Activated CD8-positive, alpha-beta memory T cell treated with anti-CD3 and anti-CD28 coated beads, Interleukin-2, amount 10 ng/mL, durations not matched to agents 7 days and 5 days (primary cell): ENCODE measurements at regions of chr17 and their contacts with region 1.

Region 1: GRCh38 chr17:64025732-64026294 is 5.4 kb upstream of the ICAM2 start:
- DNase-seq: peak; percentile 97
- ATAC-seq: peak; percentile 87
- H3K4me3 Mint-ChIP-seq: peak overlapping the region; percentile 65
- H3K27ac Mint-ChIP-seq: peak overlapping the region; percentile 92
- H3K4me1 Mint-ChIP-seq: peaks cover 60% of the 10 kb centered on the region
- H3K27me3 Mint-ChIP-seq: no peaks in the 10 kb centered on the region

Region 2: GRCh38 chr17:63904316-63904715 is 121.5 kb before region 1 on chr17:
- CTCF ChIA-PET with region 1: interaction called, 11 read pairs
- DNase-seq: no peak
- ATAC-seq: no peak
- H3K4me3 Mint-ChIP-seq: no peak overlapping the region
- H3K27ac Mint-ChIP-seq: no peak overlapping the region
- H3K4me1 Mint-ChIP-seq: peaks cover 5% of the 10 kb centered on the region
- H3K27me3 Mint-ChIP-seq: peaks cover 43% of the 10 kb centered on the region

Region 3: GRCh38 chr17:63931099-63931561 is 94.7 kb before region 1 on chr17:
- CTCF ChIA-PET with region 1: interaction called, 14 read pairs
- DNase-seq: peak; percentile 82
- ATAC-seq: peak; percentile 88
- H3K4me3 Mint-ChIP-seq: peak overlapping the region; percentile 81
- H3K27ac Mint-ChIP-seq: peak overlapping the region; percentile 86
- H3K4me1 Mint-ChIP-seq: peaks cover 20% of the 10 kb centered on the region
- H3K27me3 Mint-ChIP-seq: peaks cover 7% of the 10 kb centered on the region

Region 4: DNA sequence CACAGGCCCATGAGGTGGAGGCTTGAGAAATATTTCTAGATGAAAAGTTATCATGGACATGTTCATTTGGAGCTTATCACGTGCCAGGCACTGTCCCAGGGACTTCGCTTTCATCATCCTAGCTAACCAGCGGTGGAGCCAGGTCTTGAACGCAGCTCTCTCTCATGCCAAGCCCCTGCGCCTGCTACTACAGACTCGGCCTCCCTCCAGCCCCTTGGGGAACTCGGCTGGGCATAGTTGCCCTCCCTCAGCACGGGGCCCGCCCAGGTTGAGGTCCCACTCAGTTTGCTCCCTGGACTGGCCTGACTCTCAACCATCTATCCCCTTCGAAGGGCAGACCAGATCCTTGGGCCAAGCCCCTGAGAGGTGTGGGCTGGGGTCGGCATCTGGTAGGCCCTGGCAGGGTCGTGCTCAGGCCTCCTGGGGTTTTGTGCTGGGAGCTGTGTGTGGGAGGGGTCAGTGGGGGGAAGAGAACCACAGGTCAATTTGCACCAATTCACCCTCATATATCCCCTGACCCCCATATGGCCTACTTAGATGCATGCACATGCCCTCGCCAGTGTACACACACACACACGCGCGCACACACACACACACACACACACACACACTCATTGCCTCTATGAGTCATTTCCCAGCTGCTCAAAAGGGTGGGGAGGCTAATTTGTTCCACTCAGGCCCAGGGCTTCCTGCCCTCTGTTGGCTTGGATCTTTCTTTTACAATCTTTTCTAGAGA is 41.0 kb before region 1 on chr17:
- CTCF ChIA-PET with region 1: interaction called, 126 read pairs
- DNase-seq: peak; percentile 67
- ATAC-seq: peak; percentile 83
- H3K4me3 Mint-ChIP-seq: no peak overlapping the region
- H3K27ac Mint-ChIP-seq: peak overlapping the region; percentile 72
- H3K4me1 Mint-ChIP-seq: peaks cover 15% of the 10 kb centered on the region
- H3K27me3 Mint-ChIP-seq: no peaks in the 10 kb centered on the region

Region 5: DNA sequence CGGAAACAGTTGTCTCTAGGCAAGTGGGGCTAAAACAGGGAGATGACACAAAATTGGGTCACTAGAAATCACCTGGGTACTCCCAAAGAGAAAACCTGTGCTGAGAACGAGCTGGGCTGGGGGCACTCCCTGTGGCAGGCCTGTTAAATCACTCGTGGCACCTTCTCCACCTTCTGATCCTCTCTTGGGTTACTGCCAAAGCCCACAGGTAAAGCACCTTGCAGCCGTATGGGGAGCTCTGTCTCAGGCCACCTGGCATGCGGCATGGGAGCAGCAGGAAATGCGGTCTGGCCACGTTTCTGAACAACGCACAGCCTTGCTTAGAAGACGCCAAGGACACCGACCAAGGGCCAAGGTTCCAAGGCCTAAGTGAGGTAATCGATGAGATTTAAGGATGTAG is 16.1 kb after region 1 on chr17:
- CTCF ChIA-PET with region 1: interaction called, 87 read pairs
- DNase-seq: no peak
- ATAC-seq: no peak
- H3K4me3 Mint-ChIP-seq: no peak overlapping the region
- H3K27ac Mint-ChIP-seq: no peak overlapping the region
- H3K4me1 Mint-ChIP-seq: peaks cover 5% of the 10 kb centered on the region
- H3K27me3 Mint-ChIP-seq: no peaks in the 10 kb centered on the region

Region 6: DNA sequence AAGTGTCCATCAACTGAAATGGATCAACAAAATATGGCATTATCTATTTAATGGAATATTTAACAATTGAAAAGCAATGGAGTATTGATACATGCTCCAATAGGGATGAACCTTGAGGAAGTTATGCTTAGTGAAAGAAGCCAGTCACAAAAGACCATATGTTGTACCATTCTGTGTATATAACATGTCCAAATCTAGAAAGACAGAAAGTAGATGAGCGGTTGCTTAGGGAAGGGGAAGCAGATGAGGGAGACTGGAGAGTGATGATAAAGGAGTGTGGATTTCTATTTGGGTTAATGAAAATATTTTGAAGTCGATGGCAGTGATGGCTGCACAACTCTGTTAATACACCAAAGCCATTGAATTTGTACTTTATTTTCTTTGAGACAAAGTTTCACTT is 112.6 kb after region 1 on chr17:
- CTCF ChIA-PET with region 1: interaction called, 488 read pairs
- DNase-seq: no peak
- ATAC-seq: no peak
- H3K4me3 Mint-ChIP-seq: no peak overlapping the region
- H3K27ac Mint-ChIP-seq: no peak overlapping the region
- H3K4me1 Mint-ChIP-seq: no peaks in the 10 kb centered on the region
- H3K27me3 Mint-ChIP-seq: peaks cover 5% of the 10 kb centered on the region

Region 7: DNA sequence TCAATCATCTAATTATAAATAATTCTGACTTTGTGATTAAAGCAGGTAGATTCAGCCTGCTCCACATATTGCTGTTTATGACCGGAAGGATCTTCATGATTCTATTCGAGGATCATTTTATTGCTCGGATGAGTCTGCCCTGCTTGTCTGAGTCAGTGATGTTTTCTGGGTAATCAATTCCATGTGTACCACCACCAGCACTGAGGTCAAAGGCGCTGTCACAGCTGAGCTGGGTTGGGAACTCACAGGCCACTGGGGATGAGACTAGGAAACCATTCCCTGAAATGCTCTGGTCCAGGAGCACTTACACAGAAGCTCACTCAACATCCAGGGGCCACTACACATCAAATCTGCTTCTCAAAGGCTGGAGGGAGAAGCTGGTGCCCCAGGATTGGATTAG is 134.6 kb after region 1 on chr17:
- CTCF ChIA-PET with region 1: no interaction called
- DNase-seq: peak; percentile 11
- ATAC-seq: no peak
- H3K4me3 Mint-ChIP-seq: no peak overlapping the region
- H3K27ac Mint-ChIP-seq: no peak overlapping the region
- H3K4me1 Mint-ChIP-seq: no peaks in the 10 kb centered on the region
- H3K27me3 Mint-ChIP-seq: no peaks in the 10 kb centered on the region